Right ventricle myocardium superior (tissue), 1 donor: ENCODE measurements at regions of chrX and their contacts with region 1.

Region 1: GRCh38 chrX:55057675-55058249 is 17.1 kb upstream of the PAGE2B start:
- DNase-seq: no peak
- ATAC-seq: peak; percentile 71

Region 2: DNA sequence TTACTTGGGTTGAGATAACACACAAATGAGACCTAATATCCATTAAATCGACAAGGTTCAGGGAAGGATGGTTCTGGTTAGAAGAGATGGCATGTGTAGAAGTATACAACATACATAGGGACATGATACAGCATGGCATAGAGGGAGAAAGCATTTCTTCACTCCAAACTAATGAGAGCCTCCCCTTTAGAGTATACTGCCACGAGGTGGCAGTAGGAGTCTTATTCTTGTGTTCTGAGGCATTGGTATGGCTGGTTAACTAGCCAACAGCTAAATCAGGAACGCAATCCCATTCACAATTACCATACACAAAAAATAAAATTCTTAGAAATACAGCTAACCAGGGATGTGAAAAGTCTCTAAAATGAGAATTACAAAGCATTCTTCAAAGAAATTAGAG is 166.2 kb before region 1 on chrX:
- intact Hi-C with region 1: loop called (anchors 5 kb)
- DNase-seq: no peak
- ATAC-seq: no peak

Region 3: DNA sequence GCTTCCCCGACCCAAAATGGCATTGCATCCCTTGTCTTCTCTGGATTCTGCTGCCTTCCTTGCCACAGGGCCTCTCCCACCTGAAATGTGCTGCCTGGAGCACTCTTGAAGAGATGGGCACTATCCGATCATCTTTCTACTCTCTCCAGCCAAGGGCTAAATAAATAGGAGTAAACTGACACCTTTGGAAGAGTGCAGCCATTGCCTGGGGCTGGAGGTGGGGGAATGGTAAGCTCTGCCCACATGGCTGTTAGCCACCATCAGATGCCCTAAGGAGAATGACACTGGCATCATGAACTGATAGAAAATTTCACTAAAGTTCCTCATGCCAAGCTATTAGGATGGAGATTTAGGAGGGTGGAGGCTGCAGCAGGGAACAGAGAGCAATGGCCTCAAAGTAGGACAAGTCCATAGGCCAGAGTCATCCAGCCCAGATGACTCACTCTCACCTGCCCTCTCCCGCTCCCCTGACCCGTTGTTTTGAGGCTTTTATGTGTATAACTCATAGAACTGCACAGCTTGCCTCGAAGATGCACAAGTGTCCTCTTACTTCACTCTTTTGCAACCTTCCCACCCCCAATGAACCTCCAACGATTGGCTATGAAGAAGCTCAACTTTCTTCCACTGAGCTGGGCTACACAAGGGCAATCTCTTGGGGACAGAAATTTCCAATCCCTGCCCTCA is 63.0 kb before region 1 on chrX:
- intact Hi-C with region 1: no loop called
- DNase-seq: no peak
- ATAC-seq: no peak